ENCODE measurements at regions of chr16 and their contacts with region 1.

Region 1: GRCh38 chr16:2047330-2048115 is at the starts of genes NTHL1 and TSC2:
- DNase-seq: peak; percentile 97
- H3K4me3 ChIP-seq: peak within 1 kb of the TSS; percentile 71 to 97 (median 76)
- H3K27ac ChIP-seq: peak within 1 kb of the TSS; percentile 86 to 92 (median 88)
- H3K4me1 ChIP-seq: peaks cover 29 to 54% (median 46%) of the 10 kb centered on the region in 4 donors
- H3K27me3 ChIP-seq: no peaks in the 10 kb centered on the region
- CTCF ChIP-seq: peak; percentile 24 to 75 (median 41)
- EP300 ChIP-seq: no peak
- POLR2A ChIP-seq: peak; percentile 7
- total RNA-seq, gene NTHL1: 12.7 to 32.9 (median 23.2) TPM
- total RNA-seq, gene TSC2: 88.3 to 206 (median 127) TPM

Region 2: GRCh38 chr16:430904-431303 is 1616.6 kb before region 1 on chr16:
- in situ Hi-C with region 1: no loop called
- intact Hi-C with region 1: loop called (anchors 10 kb)
- DNase-seq: no peak
- H3K4me3 ChIP-seq: no peak overlapping the region
- H3K27ac ChIP-seq: no peak overlapping the region
- H3K4me1 ChIP-seq: peaks cover 0 to 22% (median 8%) of the 10 kb centered on the region in 4 donors
- H3K27me3 ChIP-seq: no peaks in the 10 kb centered on the region
- CTCF ChIP-seq: no peak
- EP300 ChIP-seq: no peak
- POLR2A ChIP-seq: no peak